OCI-LY7 (cell line): ENCODE measurements at regions of chr9 and their contacts with region 1.

Region 1: DNA sequence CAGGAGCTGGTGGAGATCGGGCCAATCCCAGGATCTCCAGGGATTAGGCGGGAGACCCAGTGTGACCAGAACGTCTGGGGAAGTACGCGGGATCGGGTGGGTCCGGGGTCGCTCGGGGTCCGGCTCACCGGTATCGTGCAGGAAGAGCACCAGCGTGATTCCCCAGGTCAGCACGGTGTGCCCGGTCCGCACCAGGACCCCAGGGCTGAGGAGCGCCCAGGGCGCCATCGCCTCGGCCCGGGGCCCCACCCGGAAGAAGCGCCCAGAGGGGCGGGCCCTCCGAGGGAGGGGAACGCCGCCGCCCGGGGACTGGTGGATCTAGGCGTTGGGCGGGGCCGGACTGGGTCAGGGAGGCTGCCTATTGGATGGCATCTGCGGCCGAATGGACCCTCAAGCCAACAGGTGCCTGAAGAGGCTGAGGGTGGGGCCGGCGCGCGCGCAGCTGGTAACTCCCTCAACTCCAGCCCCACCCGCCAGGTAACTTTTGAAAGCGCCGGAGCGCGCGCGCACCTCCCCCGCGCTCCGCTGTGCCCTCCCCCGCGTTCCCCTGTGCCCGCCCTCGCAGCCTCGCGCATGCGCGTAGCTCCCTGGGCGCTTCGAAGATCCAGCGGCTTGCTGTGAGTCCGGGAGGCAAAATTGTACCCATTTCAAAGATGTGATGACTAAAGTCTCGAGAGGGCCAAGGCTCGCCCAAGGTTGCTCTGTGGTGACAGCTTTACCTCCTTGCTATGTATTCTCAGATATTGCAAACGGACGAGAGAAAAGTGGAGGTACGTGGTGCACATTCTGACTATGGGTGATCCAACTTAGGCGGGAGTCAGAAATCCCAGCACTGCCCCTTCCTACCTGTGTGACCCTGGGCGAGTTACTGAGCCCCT is at the start of gene ZDHHC12:
- DNase-seq: peak; percentile 100
- H3K4me3 ChIP-seq: peak within 1 kb of the TSS; percentile 90
- H3K27ac ChIP-seq: peak within 1 kb of the TSS; percentile 26
- H3K4me1 ChIP-seq: peaks cover 29% of the 10 kb centered on the region
- CTCF ChIP-seq: no peak
- total RNA-seq, gene ZDHHC12: 29.0 and 56.8 TPM in 2 replicates

Region 2: GRCh38 chr9:128455849-128456612 is 268.1 kb before region 1 on chr9 and contains the start of gene ODF2:
- CTCF ChIA-PET with region 1: no interaction called
- POLR2A ChIA-PET with region 1: no interaction called
- intact Hi-C with region 1: loop called (anchors 5 kb)
- DNase-seq: peak; percentile 98
- H3K4me3 ChIP-seq: peak within 1 kb of the TSS; percentile 76
- H3K27ac ChIP-seq: peak within 1 kb of the TSS; percentile 75
- H3K4me1 ChIP-seq: peaks cover 10% of the 10 kb centered on the region
- CTCF ChIP-seq: no peak
- total RNA-seq, gene ODF2: 84.4 and 94.3 TPM in 2 replicates

Region 3: GRCh38 chr9:128643519-128644300 is 80.4 kb before region 1 on chr9:
- CTCF ChIA-PET with region 1: no interaction called
- POLR2A ChIA-PET with region 1: interaction called, 3 read pairs
- intact Hi-C with region 1: loop called (anchors 10 kb)
- DNase-seq: peak; percentile 89
- H3K4me3 ChIP-seq: peak overlapping the region; percentile 42
- H3K27ac ChIP-seq: peak overlapping the region; percentile 87
- H3K4me1 ChIP-seq: peaks cover 27% of the 10 kb centered on the region
- CTCF ChIP-seq: no peak

Region 4: DNA sequence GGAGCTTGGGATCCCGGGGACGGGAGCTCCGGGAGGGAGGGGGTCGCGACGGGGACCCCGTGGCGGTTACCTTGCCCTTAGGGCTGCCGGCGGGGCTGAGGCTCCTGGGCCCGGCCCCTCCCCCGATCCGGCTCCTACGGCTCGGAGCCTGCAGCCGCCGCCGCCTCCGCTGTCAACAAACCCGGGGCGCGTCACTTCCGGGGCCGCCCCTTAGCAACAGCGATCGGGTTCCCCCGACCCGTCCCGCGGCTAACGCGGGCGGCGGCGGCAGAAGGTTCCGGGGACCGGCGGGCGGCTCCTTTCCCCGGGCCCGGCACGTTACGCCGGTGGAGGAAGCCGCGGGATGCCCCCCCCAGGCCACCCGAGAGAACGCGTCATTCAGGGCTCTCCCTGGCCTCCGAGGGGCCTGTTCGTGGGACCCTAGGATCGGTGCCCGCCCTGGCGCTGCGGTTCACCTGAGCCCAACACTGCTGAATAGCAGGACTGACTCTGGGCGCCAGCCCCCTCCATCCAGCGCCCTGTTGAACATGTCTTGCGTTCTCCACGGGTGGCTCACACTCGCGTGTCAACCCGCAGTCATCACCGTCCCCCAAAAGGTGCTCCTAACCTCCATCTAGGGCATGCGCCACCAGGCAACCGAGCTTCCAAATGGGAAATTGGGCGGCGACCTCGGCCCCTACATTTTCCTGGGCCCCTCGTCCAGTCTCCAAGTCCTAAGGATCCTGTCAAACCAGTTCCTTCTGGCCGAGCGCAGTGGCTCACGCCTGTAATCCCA is 47.8 kb after region 1 on chr9 and contains the start of gene ZER1:
- CTCF ChIA-PET with region 1: no interaction called
- POLR2A ChIA-PET with region 1: interaction called, 6 read pairs
- intact Hi-C with region 1: loop called (anchors 2 kb)
- DNase-seq: peak; percentile 94
- H3K4me3 ChIP-seq: peak within 1 kb of the TSS; percentile 86
- H3K27ac ChIP-seq: peak within 1 kb of the TSS; percentile 64
- H3K4me1 ChIP-seq: peaks cover 16% of the 10 kb centered on the region
- CTCF ChIP-seq: no peak
- total RNA-seq, gene ZER1: 6.9 and 11.0 TPM in 2 replicates

Region 5: GRCh38 chr9:128798896-128799295 is 74.8 kb after region 1 on chr9:
- CTCF ChIA-PET with region 1: no interaction called
- POLR2A ChIA-PET with region 1: no interaction called
- intact Hi-C with region 1: no loop called
- DNase-seq: no peak
- H3K4me3 ChIP-seq: no peak overlapping the region
- H3K27ac ChIP-seq: no peak overlapping the region
- H3K4me1 ChIP-seq: no peaks in the 10 kb centered on the region
- CTCF ChIP-seq: no peak

Region 6: DNA sequence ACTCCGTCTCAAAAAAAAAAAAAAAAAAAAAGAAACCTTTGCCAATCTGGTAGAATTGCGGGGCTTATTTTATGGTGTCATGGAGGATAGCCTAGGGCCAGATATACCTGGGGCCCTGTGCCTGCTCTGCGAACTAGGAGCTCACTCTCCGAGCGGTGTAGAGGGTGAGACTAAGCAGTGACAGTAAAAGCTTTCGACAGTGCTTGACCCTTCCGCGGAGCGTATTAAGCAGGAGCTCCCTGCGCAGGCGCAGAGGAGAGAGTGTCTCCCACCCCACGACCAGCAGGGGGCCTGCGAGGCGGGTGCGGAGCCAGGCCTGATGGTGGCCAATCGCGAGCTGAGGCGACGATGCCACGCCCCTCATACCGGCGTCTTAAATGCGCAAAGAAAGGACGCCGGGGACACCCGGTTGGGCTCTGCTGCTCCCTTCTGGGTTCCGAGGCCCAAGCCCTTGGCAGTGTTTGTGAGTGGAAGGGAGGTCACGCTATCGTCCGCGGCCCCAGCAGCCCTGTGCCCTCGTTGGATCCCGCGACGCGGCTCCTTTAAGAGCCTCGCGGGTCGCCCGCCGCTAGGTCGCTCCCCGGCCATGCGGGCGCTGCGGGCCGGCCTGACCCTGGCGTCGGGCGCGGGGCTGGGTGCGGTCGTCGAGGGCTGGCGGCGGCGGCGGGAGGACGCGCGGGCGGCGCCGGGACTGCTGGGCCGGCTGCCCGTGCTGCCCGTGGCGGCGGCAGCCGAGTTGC is 94.2 kb after region 1 on chr9 and contains the start of gene ENDOG:
- CTCF ChIA-PET with region 1: interaction called, 4 read pairs
- POLR2A ChIA-PET with region 1: interaction called, 3 read pairs
- intact Hi-C with region 1: loop called (anchors 1 kb)
- DNase-seq: peak; percentile 98
- H3K4me3 ChIP-seq: peak within 1 kb of the TSS; percentile 71
- H3K27ac ChIP-seq: no peak within 1 kb of the TSS
- H3K4me1 ChIP-seq: peaks cover 23% of the 10 kb centered on the region
- CTCF ChIP-seq: peak; percentile 87
- total RNA-seq, gene ENDOG: 31.9 and 35.2 TPM in 2 replicates

Region 7: DNA sequence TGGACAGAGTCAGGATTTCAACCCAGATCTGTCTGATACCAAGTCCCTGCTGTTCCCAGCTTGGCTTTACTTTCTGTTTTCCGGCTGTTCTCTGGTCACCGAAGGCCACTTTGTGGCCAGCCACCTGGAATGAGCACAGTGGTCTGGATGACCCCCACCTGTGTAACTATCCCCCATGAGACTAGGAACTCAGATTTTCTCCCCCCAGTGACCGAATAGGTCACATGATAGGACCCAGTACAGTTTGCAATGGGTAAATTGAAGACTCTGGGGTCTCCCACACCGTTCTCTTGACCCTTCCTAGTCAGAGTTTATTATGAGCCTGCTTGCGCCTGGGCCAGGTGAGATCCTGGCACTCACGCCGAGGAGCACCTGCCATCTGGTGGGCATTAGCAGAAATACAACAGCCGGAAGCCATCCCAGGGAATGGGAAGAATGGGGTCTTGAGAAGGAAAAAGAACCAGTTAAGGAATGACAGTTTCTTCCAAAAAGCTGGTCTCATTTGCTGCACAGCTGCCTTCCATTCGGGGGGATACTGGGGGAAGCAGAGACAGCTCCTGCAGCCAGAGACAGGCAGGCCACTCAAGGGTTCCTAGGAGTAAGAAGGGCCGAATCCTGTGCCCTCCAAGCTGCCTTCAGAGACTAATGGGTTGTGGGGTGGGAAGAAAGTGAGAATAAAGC is 203.8 kb after region 1 on chr9:
- CTCF ChIA-PET with region 1: no interaction called
- POLR2A ChIA-PET with region 1: no interaction called
- intact Hi-C with region 1: loop called (anchors 10 kb)
- DNase-seq: peak; percentile 70
- H3K4me3 ChIP-seq: no peak overlapping the region
- H3K27ac ChIP-seq: no peak overlapping the region
- H3K4me1 ChIP-seq: peaks cover 17% of the 10 kb centered on the region
- CTCF ChIP-seq: peak; percentile 95

Region 8: DNA sequence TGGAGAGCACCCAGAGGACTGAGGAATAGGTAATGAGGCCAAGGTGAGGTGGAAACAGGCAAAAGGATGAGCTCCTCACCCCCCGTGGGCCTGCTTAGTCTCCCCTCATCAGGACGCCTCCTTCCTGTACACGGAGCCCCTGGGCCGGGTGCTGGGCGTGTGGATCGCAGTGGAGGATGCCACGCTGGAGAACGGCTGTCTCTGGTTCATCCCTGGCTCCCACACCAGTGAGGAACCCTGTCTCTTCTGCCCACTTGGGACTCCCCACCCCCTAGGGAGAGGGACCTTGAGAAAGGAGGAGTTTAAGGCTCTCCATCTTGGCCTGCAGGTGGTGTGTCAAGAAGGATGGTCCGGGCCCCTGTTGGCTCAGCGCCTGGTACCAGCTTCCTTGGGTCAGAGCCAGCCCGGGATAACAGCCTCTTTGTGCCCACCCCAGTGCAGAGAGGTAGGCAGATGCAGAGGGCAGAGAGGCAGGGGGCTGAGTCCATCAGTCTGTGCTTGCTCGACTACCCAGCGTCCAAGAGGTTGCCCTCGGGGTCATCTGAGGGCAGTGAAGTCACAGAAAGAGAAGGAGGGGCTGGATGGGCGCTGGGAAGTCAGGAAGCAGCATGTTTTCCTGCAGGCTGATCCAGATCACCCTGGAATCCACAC is 216.3 kb after region 1 on chr9:
- CTCF ChIA-PET with region 1: no interaction called
- POLR2A ChIA-PET with region 1: no interaction called
- intact Hi-C with region 1: no loop called
- DNase-seq: no peak
- H3K4me3 ChIP-seq: no peak overlapping the region
- H3K27ac ChIP-seq: no peak overlapping the region
- H3K4me1 ChIP-seq: no peaks in the 10 kb centered on the region
- CTCF ChIP-seq: no peak